ENCODE measurements at regions of chr7 and their contacts with region 1.

Region 1: DNA sequence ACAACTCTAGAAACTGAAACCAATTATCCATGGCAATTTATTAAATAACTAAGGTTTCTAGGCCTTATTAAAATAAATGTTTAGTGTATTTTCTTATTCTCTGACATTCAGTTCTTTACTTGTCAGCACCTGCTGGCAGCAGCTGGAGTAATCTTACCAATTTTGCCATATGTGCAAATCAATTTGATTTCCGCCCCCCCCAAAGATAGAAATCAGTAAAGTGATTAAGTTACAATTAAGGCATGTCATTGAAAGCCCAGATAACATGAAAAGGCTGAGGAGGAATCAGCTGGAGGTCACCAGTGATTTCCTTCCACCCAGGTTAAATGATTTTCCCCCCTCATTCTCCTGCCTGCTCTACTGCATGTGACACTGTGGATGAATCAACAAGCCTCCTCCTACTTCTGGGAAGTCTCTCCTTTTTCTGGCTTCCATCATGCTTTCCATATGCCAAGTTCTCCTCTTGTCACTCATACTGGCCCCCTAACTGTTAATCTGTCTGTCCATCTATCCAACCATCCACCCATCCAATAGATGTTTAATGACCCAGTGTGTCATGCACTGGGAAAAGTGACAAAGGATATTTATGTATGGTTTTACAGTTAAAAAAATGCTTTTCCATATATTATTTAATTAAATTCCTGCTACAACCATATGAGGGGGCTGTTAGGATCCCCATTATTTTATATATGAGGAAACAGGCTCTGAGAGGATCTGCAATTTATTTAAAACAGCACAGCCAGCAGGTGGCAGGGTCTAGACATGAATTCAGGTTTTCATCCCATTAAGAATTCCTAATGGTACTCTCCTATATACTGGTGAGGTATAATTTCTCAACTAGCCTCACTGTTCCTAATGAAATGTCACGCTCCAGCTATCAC is 116.5 kb downstream of the ATXN7L1 start:
- DNase-seq: peak; percentile 22
- CTCF ChIP-seq: peak; percentile 62

Region 2: DNA sequence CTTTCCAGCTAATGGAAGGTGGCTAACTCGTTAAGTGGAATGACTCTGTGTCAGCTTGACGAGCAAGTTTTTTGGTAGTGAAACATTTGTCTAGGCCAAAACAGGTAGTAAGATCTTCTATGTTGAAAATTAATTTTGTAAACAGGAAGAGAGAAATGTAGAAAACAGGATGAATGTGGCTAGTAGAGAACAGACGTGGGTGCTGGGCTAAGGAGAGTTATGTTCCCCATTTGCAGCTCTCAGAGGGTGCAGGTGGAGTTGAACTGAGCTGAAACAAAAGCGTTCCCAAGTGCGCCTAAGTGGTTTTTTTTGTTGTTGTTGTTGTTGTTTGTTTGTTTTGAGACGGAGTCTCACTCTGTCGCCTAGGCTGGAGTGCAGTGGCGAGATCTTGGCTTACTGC is 311.7 kb before region 1 on chr7:
- CTCF ChIA-PET with region 1: no interaction called
- POLR2A ChIA-PET with region 1: no interaction called
- DNase-seq: peak; percentile 30
- CTCF ChIP-seq: no peak

Region 3: GRCh38 chr7:105748701-105749100 is 11.2 kb before region 1 on chr7:
- CTCF ChIA-PET with region 1: interaction called, 13 read pairs
- POLR2A ChIA-PET with region 1: no interaction called
- DNase-seq: no peak
- CTCF ChIP-seq: no peak

Region 4: DNA sequence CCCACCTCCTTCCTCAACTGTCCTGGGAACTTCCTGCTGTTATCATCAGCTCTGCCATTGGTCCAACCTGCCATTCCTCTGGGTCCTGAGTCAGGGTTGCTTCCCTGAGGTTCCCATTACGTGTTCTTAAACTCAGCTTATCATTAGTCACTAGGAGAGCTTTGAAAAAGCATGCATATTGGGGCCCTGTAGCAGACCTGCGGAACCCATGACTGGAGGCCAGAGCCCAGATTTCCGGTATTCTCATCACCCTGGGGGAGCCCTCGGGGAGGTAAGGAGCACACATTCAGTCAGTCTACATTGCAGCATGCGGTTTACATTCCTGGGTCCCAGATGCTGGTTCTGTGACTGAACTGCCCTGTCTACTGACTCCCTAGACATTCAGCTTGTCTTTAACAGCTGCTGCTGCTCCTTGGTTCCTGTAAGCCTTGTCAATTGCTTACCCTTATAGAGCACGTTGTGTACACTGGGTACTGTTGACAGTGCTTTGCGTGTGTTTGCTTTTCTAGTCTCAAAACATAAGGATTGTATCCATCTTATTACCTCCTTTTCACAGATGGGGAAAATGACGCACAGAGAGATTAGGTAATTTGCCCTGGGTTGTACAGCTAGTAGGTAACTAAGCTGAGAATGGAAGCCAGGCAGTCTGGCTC is 216.0 kb after region 1 on chr7:
- CTCF ChIA-PET with region 1: no interaction called
- POLR2A ChIA-PET with region 1: no interaction called
- DNase-seq: no peak
- CTCF ChIP-seq: no peak

Region 5: GRCh38 chr7:106001196-106001595 is 241.3 kb after region 1 on chr7:
- CTCF ChIA-PET with region 1: interaction called, 10 read pairs
- POLR2A ChIA-PET with region 1: no interaction called
- DNase-seq: no peak
- CTCF ChIP-seq: no peak

Region 6: GRCh38 chr7:106009403-106010226 is 249.7 kb after region 1 on chr7:
- CTCF ChIA-PET with region 1: interaction called, 24 read pairs
- POLR2A ChIA-PET with region 1: no interaction called
- DNase-seq: peak; percentile 83
- CTCF ChIP-seq: peak; percentile 81

Region 7: GRCh38 chr7:106050011-106050745 is 290.3 kb after region 1 on chr7:
- CTCF ChIA-PET with region 1: interaction called, 61 read pairs
- POLR2A ChIA-PET with region 1: no interaction called
- DNase-seq: no peak
- CTCF ChIP-seq: no peak